Ovary (tissue), 10 donors: ENCODE measurements at regions of chr13 and their contacts with region 1.

Region 1: DNA sequence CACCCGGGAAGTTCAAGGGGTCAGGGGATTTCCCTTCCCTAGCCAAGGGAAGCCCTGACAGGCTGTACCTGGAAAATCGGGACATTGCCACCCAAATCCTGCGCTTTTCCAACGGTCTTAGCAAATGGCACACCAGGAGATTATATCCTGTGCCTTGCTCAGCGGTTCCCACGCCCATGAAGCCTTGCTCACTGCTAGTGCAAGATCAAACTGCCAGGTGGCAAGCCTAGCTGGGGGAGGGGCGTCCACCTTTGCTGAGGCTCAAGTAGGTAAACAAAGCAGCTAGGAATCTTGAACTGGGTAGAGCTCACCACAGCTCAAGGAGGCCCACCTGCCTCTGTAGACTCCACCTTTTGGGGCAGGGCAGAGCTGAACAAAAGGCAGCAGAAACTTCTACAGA is 1794.5 kb downstream of the PCDH9 start:
- DNase-seq: no peak
- H3K4me3 ChIP-seq: no peak overlapping the region
- H3K27ac ChIP-seq: no peak overlapping the region
- H3K4me1 ChIP-seq: no peaks in the 10 kb centered on the region
- H3K27me3 ChIP-seq: no peaks in the 10 kb centered on the region
- CTCF ChIP-seq: no peak
- EP300 ChIP-seq: no peak
- POLR2A ChIP-seq: no peak

Region 2: DNA sequence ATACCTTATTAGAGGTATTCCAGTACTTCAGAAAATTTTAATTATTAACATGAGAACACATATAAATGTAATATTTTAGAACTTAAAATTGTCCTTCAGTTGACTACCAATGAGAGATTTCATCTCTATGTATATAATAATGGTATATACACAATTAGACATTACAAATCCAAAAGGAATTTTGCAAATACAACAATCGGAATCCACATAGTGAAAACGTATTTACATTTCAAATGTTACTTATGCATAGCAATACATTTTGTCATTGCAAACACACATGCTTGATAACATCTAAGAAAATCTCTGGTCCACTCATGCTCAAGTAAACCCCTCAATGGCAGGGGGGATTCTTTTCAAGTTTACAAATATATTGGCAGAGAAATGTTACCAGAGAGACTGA is 550.6 kb before region 1 on chr13:
- intact Hi-C with region 1: no loop called
- DNase-seq: no peak
- H3K4me3 ChIP-seq: no peak overlapping the region
- H3K27ac ChIP-seq: no peak overlapping the region
- H3K4me1 ChIP-seq: no peaks in the 10 kb centered on the region
- H3K27me3 ChIP-seq: no peaks in the 10 kb centered on the region
- CTCF ChIP-seq: no peak
- EP300 ChIP-seq: no peak
- POLR2A ChIP-seq: no peak

Region 3: DNA sequence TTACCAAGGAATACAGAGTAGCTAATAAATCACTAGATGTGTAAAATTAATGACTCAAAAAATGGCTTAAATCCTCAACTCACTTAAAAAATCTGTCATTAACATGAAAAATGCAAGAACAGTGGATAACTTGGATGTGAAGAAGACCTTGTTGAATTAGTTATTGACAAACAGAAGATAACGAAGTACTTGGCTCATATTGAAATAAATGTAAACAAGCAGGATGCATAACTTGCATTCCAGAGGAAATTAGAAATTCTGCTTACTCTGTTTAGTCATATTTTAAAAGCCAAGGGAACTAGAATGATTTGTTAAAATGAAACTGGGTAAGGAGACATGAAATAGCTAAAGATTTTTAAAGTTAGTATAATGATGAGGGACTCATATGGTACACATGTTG is 17.6 kb before region 1 on chr13:
- intact Hi-C with region 1: loop called in 1 of 4 experiments (anchors 1 kb)
- DNase-seq: no peak
- H3K4me3 ChIP-seq: no peak overlapping the region
- H3K27ac ChIP-seq: no peak overlapping the region
- H3K4me1 ChIP-seq: no peaks in the 10 kb centered on the region
- H3K27me3 ChIP-seq: no peaks in the 10 kb centered on the region
- CTCF ChIP-seq: no peak
- EP300 ChIP-seq: no peak
- POLR2A ChIP-seq: no peak

Region 4: DNA sequence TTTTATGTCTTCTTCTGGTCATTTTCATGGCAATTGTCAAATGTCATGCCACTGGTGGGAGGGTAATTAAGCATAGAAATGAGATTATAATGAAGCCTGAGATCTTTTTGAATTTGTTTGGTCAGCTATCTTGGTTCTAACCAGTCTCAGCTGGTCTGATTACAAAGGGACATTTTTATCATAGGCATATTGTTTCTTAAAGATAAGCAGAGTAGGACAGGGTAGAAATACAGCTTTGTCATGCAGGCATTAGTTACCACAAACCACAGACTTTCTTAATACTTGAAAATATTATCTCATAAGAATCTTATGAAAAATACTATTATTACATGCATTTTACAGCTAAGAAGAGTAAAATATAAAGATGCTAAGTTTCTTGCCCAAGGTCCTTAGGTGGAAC is 33.0 kb after region 1 on chr13:
- intact Hi-C with region 1: no loop called
- DNase-seq: no peak
- H3K4me3 ChIP-seq: no peak overlapping the region
- H3K27ac ChIP-seq: no peak overlapping the region
- H3K4me1 ChIP-seq: no peaks in the 10 kb centered on the region
- H3K27me3 ChIP-seq: no peaks in the 10 kb centered on the region
- CTCF ChIP-seq: no peak
- EP300 ChIP-seq: no peak
- POLR2A ChIP-seq: no peak